Right ventricle myocardium superior (tissue), 1 donor: ENCODE measurements at regions of chr2 and their contacts with region 1.

Region 1: GRCh38 chr2:8681786-8682692 is at the start of gene ID2:
- DNase-seq: peak; percentile 100
- ATAC-seq: peak; percentile 77
- total RNA-seq, gene ID2: 25.5 TPM

Region 2: DNA sequence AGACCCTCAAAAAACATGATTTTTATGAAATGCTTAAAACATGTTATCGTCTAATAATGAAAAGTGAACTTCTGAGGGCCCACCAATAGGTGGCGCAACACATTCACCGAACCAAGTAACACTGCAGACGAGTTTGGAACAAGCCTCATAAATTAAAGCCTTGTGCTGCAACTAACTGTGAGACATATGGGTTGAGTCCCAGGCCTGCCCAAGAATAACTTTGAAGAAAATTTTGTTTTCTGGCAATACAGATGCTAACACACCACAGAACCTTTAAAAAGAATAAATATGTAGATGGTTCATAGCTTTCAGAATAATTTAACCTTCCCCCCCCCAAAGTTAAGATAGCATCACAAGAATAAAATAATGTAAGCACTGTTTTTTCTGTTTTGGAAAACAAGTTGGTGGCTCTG is 1479.0 kb before region 1 on chr2:
- intact Hi-C with region 1: loop called (anchors 10 kb)
- DNase-seq: no peak
- ATAC-seq: peak; percentile 60

Region 3: DNA sequence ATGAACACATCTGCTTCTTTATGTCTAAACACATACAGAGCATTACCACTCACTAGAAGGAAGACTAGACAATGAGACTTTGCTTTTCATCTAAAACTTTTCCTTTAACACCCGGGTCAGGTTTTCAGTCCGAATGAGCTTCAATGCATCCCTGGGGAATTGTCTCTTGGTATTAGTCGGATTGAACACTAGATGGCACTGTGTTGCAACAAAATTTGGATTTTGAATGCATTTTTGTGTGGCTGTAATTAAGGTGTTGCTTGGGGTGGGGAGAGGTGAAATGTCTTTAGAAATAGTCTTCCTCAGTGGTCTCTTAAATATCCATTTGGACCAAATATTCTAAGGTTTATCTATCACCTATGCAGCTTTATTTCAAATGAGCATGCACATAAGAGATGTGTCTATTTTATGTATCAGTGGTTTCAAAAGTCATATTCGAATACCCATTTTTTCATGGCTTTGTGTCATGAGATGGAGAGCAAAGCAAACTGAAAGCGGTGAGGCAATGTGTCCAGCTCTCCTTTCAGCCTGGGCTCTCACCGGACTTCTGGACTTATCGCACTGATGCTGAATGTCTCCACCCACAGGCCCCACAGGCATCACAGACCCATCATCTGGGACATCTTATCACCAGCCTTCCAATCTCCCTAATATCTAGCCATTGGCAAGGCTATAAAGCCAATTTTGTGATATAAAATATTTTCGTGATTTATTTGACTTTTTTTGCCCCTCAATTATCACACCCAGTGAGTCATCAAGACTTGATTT is 1254.6 kb before region 1 on chr2:
- intact Hi-C with region 1: loop called (anchors 2 kb)
- DNase-seq: no peak
- ATAC-seq: peak; percentile 68

Region 4: DNA sequence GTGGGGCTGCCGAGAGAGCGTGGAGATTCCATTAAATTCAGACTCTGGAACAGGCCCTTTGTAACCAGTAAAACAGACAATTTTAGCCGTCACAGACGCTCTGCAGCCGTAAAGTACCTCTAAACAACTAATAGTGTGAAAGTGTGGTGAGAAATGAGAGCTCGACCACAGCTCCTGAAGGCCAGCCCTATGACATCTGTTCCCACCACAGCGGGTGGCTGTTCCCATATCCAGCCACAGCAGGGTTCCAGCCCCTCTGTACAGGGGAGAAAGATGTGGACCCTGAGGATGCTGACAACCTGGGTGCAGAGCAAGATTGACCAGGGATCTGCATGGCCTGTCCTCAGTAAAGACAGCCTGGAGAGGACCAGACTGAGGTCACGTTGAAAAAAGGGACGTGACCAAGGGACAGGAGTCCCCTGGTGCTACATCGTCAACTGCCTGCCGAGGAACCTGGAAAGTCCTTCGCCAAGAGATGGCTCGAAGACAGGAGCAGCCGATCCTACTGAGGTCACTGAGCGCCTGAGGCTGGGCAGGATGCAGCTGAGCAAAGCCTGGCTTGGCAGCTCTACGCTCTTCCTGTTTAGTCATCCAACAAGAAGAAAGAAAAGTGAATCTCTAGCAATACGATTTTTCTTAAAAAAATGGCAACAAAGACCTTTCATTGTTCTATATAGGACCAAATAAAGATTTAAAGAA is 933.2 kb before region 1 on chr2:
- intact Hi-C with region 1: loop called (anchors 10 kb)
- DNase-seq: no peak
- ATAC-seq: no peak

Region 5: DNA sequence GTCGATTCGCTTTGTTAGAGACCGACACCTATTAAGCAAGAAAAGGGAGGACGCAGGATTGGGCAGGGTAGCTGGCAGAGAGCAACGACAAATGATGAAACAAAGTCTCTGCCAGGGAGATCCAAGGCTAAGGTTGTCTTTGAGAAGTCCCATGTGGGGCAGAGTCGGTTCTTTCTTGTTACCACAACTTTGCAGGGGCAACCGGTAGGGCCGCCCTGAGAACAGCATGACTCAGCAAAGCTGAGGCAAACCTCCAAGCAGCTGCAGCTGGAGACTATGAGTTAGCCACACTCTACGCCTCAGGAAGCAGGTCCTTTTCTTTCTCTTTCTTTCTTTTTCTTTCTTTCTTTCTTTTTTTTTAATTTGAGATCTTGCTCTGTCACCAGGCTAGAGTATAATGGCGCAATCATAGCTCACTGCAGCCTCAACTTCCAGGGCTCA is 452.5 kb before region 1 on chr2:
- intact Hi-C with region 1: loop called (anchors 10 kb)
- DNase-seq: peak; percentile 77
- ATAC-seq: peak; percentile 81

Region 6: GRCh38 chr2:8477552-8478470 is 204.2 kb before region 1 on chr2:
- intact Hi-C with region 1: loop called (anchors 10 kb)
- DNase-seq: no peak
- ATAC-seq: no peak

Region 7: GRCh38 chr2:9053534-9053931 is 371.5 kb after region 1 on chr2:
- intact Hi-C with region 1: no loop called
- DNase-seq: no peak
- ATAC-seq: no peak